B cell (primary cell): ENCODE measurements at regions of chr19 and their contacts with region 1.

Region 1: DNA sequence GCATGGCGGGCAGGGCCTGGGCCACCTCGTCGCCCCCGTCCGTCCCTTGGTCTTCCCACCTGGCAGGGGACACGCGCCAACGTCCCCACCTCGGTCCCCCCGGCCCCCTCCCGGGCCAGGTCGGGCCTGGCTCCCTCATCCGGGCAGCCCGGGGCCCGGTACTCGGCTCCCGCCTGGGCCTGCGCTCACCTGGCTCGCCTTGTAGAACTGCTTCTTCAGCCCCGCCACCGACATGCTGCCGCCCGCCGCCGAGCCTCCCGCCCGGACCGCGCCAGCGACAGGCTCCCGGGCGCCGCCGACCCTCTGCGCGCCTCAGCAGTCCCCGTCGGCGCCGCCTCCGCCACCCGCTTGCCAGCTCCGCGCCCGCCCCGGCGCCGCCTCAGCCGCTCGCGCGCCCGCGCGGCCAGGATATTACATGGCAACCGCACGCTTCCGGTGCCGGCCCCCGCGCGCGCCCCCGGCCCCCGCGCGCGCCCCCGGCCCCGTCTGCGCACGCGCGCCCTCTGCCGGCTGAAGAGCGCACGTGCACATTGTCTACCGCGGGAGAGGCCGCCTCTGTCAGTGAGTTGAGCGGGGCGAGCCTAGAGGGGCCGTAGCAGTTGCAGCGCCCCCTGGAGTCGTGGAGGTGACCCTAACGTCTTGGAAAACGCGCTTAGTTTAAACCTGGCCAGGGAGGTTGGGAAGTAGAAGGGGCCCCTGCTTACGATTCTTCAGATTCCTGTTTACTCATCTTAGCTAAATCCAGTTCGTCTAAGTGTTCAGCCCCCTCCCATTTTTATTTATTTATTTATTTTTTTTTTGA is at the start of gene SH3GL1:
- DNase-seq: peak; percentile 96
- ATAC-seq: peak; percentile 68
- H3K4me3 ChIP-seq: peak within 1 kb of the TSS; percentile 85 to 99 (median 88)
- H3K4me3 Mint-ChIP-seq: peak within 1 kb of the TSS; percentile 85
- H3K27ac ChIP-seq: peak within 1 kb of the TSS; percentile 49 to 97
- H3K27ac Mint-ChIP-seq: peak within 1 kb of the TSS; percentile 88
- H3K4me1 ChIP-seq: peaks cover 29 to 44% of the 10 kb centered on the region in 2 donors
- H3K4me1 Mint-ChIP-seq: peaks cover 53% of the 10 kb centered on the region
- H3K27me3 ChIP-seq: no peaks in the 10 kb centered on the region
- H3K27me3 Mint-ChIP-seq: no peaks in the 10 kb centered on the region
- CTCF ChIP-seq: peak; percentile 77
- total RNA-seq, gene SH3GL1: 37.2 and 41.9 TPM in 2 replicates

Region 2: GRCh38 chr19:4246767-4247593 is 153.4 kb before region 1 on chr19 and contains the start of gene YJU2:
- CTCF ChIA-PET with region 1: interaction called, 3 read pairs
- POLR2A ChIA-PET with region 1: no interaction called
- intact Hi-C with region 1: loop called (anchors 1 kb)
- DNase-seq: peak; percentile 99
- ATAC-seq: peak; percentile 94
- H3K4me3 ChIP-seq: peak within 1 kb of the TSS; percentile 86 to 99 (median 98)
- H3K4me3 Mint-ChIP-seq: peak within 1 kb of the TSS; percentile 91
- H3K27ac ChIP-seq: peak within 1 kb of the TSS; percentile 99 to 100
- H3K27ac Mint-ChIP-seq: peak within 1 kb of the TSS; percentile 95
- H3K4me1 ChIP-seq: peaks cover 12 to 24% of the 10 kb centered on the region in 2 donors
- H3K4me1 Mint-ChIP-seq: peaks cover 23% of the 10 kb centered on the region
- H3K27me3 ChIP-seq: no peaks in the 10 kb centered on the region
- H3K27me3 Mint-ChIP-seq: no peaks in the 10 kb centered on the region
- CTCF ChIP-seq: peak; percentile 40
- total RNA-seq, gene YJU2: 39.8 and 40.3 TPM in 2 replicates

Region 3: DNA sequence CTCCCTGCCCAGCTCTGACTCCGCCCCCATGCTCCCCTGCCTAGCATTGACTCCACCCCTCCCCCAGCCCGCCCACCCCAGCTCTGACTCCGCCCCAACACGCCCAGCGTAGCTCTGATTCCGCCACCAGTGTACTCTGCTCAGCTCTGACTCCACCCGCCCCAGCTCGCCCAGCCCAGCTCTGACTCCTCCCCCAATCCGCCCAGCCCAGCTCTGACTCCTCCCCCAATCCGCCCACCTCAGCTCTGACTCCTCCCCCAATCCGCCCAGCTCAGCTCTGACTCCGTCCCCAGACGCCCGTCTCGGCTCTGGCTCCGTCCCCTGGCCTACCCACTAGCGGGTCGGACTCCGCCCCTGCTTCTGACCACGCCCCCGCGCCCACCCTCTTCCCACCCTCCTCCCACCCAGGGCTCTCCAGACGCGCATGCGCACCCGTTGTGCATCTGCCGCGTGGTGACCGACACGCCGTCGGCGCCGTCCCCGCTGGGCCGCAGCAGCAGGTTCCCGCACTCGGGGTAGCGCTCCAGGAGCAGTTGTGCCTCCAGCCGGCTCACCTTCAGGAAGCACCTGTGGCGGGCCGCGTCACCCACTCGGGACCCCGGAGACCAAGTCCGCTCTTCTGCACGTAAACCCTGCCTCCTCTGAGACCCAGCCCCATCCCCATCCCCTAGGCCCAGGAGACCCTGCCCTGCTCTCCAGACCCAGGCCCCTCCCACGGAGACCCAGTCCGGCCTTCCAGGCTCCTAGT is 71.9 kb before region 1 on chr19:
- CTCF ChIA-PET with region 1: no interaction called
- POLR2A ChIA-PET with region 1: no interaction called
- intact Hi-C with region 1: loop called (anchors 1 kb)
- DNase-seq: peak; percentile 93
- ATAC-seq: peak; percentile 86
- H3K4me3 ChIP-seq: peak overlapping the region in 4 of 5 experiments; percentile 37 to 54 (median 46)
- H3K4me3 Mint-ChIP-seq: peak overlapping the region; percentile 79
- H3K27ac ChIP-seq: peak overlapping the region in 1 of 2 donors; percentile 36
- H3K27ac Mint-ChIP-seq: peak overlapping the region; percentile 85
- H3K4me1 ChIP-seq: peaks cover 18 to 31% of the 10 kb centered on the region in 2 donors
- H3K4me1 Mint-ChIP-seq: peaks cover 28% of the 10 kb centered on the region
- H3K27me3 ChIP-seq: peaks cover 0 to 11% (median 0%) of the 10 kb centered on the region in 4 experiments
- H3K27me3 Mint-ChIP-seq: no peaks in the 10 kb centered on the region
- CTCF ChIP-seq: no peak

Region 4: DNA sequence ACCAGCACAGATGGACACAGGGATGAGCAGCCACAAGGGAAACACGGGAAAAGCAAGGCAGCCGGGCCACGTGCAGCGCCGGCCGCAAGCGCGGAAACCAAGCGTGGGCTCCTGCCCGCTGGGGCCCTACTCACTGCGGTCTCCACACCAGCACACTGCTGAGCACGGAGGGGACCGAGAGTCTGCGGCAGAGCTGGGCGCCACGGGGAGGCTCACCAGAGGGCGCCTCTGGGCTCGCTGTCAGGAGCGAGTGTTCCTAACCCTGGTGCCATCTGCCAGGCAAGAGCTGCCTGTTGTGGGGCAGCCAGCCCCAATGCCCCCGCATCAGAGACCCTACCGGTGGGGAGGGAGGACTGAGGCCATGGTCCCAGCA is 30.5 kb before region 1 on chr19:
- CTCF ChIA-PET with region 1: interaction called, 29 read pairs
- POLR2A ChIA-PET with region 1: interaction called, 6 read pairs
- intact Hi-C with region 1: loop called (anchors 1 kb)
- DNase-seq: peak; percentile 70
- ATAC-seq: peak; percentile 48
- H3K4me3 ChIP-seq: peak overlapping the region in 4 of 5 experiments; percentile 40 to 68 (median 50)
- H3K4me3 Mint-ChIP-seq: peak overlapping the region; percentile 83
- H3K27ac ChIP-seq: peak overlapping the region; percentile 84 to 95
- H3K27ac Mint-ChIP-seq: peak overlapping the region; percentile 96
- H3K4me1 ChIP-seq: peaks cover 69 to 76% of the 10 kb centered on the region in 2 donors
- H3K4me1 Mint-ChIP-seq: peaks cover 62% of the 10 kb centered on the region
- H3K27me3 ChIP-seq: no peaks in the 10 kb centered on the region
- H3K27me3 Mint-ChIP-seq: no peaks in the 10 kb centered on the region
- CTCF ChIP-seq: peak; percentile 61

Region 5: DNA sequence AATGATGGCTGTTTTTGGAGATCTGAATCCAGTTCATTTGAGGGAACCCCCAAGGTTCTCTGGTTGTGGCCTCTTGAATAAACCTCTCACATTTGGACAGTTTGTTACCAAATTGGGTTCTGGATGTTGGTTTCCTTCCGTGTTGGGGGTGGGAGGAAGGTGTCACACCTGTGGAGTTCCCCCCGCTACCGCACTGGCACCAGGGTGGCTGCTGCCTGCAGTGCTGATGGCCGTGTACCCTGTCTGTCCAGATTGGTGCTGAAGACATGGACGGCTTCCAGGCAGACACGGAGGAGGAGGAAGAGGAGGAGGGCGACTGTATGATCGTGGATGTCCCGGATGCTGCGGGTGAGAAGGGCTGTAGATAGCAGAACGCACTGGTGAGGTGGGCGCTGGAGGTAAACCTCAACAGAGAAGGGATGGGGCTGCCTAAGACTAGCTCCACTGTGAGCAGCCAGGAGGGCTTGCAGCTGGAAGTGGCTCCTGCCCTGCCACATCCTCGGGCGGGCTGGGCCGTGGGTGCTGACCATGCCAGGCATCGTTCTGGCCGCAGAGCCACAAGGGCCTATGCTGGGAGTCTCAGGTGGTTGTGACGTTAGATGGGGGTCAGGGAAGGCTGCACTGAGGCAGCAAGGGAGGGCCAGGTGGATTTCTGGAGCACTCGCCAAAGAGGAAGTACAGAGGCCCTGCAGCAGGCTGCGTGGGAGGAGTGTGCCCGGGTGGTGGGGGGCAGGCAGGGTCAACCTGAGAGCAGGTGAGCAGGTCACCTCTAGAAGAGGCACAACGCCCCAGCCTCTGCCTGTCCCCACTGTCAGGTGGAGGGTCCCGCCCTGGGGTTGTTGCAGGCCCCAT is 41.9 kb after region 1 on chr19:
- CTCF ChIA-PET with region 1: no interaction called
- POLR2A ChIA-PET with region 1: no interaction called
- intact Hi-C with region 1: no loop called
- DNase-seq: peak; percentile 41
- ATAC-seq: peak; percentile 49
- H3K4me3 ChIP-seq: peak overlapping the region in 1 of 5 experiments; percentile 26
- H3K4me3 Mint-ChIP-seq: peak overlapping the region; percentile 70
- H3K27ac ChIP-seq: peak overlapping the region; percentile 7 to 60
- H3K27ac Mint-ChIP-seq: peak overlapping the region; percentile 82
- H3K4me1 ChIP-seq: peaks cover 8 to 13% of the 10 kb centered on the region in 2 donors
- H3K4me1 Mint-ChIP-seq: peaks cover 14% of the 10 kb centered on the region
- H3K27me3 ChIP-seq: no peaks in the 10 kb centered on the region
- H3K27me3 Mint-ChIP-seq: no peaks in the 10 kb centered on the region
- CTCF ChIP-seq: no peak

Region 6: GRCh38 chr19:4457654-4458395 is 57.5 kb after region 1 on chr19 and contains the start of gene UBXN6:
- CTCF ChIA-PET with region 1: interaction called, 3 read pairs
- POLR2A ChIA-PET with region 1: interaction called, 4 read pairs
- intact Hi-C with region 1: loop called (anchors 1 kb)
- DNase-seq: peak; percentile 98
- ATAC-seq: peak; percentile 95
- H3K4me3 ChIP-seq: peak within 1 kb of the TSS; percentile 52 to 76 (median 64)
- H3K4me3 Mint-ChIP-seq: peak within 1 kb of the TSS; percentile 89
- H3K27ac ChIP-seq: peak within 1 kb of the TSS; percentile 60 to 74
- H3K27ac Mint-ChIP-seq: peak within 1 kb of the TSS; percentile 95
- H3K4me1 ChIP-seq: peaks cover 9 to 19% of the 10 kb centered on the region in 2 donors
- H3K4me1 Mint-ChIP-seq: peaks cover 24% of the 10 kb centered on the region
- H3K27me3 ChIP-seq: no peaks in the 10 kb centered on the region
- H3K27me3 Mint-ChIP-seq: no peaks in the 10 kb centered on the region
- CTCF ChIP-seq: no peak
- total RNA-seq, gene UBXN6: 75.8 and 82.0 TPM in 2 replicates